ENCODE measurements at regions of chr1 and their contacts with region 1.

Region 1: DNA sequence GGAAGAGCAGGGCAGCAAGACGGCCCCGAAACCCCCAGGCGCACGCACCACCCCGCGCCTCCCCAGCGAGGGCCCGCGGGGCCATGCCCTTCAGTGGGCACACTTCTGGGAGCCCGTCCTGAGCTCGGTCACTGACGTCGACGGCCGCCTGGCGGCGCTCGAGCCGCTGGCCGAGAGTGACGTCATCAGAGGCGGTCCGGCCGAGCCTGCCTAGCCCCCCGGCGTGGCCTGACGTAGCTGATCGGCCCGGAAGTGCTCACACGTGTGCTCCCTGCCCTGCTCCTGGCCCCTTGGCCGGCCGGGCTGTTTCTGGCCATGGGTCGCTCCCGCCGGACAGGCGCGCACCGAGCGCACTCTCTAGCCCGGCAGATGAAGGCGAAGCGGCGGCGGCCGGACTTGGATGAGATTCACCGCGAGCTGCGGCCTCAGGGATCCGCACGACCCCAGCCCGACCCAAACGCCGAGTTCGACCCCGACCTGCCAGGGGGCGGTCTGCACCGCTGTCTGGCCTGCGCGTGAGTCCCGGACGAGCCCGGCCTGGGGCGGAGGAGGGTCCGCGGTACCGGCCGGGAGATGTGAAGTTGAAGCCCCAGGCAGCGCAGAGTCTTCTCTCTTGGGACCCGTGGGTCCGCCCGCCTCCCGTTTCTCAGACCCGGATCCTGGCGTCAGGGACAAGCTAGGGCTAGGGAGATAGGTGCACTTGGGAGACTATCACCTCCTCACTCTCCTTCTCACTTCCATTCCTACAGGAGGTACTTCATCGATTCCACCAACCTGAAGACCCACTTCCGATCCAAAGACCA is at the start of gene ZNF593:
- DNase-seq: peak; percentile 88
- H3K4me3 Mint-ChIP-seq: peak within 1 kb of the TSS; percentile 81
- H3K27ac Mint-ChIP-seq: peak within 1 kb of the TSS; percentile 52
- H3K4me1 Mint-ChIP-seq: no peaks in the 10 kb centered on the region
- H3K27me3 Mint-ChIP-seq: peaks cover 6% of the 10 kb centered on the region
- CTCF ChIP-seq: peak; percentile 70
- total RNA-seq, gene ZNF593: 22.2 and 23.1 TPM in 2 replicates

Region 2: DNA sequence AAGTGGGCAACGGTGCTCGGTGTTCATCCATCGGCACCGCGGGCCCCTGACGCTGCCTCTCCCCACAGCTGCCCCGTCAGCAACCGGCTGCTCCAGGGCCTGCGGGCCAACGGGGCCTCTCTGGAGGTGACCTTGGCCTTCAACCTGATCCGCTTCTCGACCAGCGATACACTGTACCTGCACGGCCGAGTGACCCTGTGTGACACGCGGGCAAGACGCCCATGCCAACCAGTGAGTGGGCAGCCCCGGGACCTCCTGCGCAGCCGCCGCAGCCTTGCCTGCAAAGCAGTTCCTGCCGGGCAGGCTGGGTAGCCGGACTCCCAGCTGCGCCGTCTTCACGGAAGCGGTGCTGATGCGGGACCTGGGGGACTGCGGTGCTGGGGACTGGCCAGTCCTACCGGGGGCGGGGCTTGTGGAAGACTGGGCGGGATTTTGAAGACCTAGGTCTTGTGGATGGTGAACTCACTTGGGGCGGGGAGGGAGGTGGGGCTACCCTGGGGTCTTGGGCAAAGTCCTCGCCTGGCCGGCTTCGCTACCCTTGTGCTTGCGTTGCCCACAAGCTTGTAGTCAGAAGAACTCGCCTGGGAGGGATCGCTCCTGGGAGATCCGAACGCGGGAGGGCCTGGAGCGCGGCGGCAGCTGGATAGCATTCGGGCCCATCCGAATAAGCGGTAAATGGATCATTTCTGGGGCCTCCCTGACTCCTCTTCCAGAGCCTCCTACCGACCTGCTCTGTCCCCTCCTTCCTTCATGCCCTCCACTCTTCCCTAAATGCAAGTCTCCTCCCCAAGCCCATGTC is 55.4 kb after region 1 on chr1:
- CTCF ChIA-PET with region 1: interaction called, 10 read pairs
- intact Hi-C with region 1: loop called (anchors 10 kb)
- DNase-seq: peak; percentile 55
- H3K4me3 Mint-ChIP-seq: peak overlapping the region; percentile 70
- H3K27ac Mint-ChIP-seq: peak overlapping the region; percentile 9
- H3K4me1 Mint-ChIP-seq: peaks cover 9% of the 10 kb centered on the region
- H3K27me3 Mint-ChIP-seq: peaks cover 14% of the 10 kb centered on the region
- CTCF ChIP-seq: no peak